CD4-positive, alpha-beta memory T cell (primary cell): ENCODE measurements at regions of chr6 and their contacts with region 1.

Region 1: DNA sequence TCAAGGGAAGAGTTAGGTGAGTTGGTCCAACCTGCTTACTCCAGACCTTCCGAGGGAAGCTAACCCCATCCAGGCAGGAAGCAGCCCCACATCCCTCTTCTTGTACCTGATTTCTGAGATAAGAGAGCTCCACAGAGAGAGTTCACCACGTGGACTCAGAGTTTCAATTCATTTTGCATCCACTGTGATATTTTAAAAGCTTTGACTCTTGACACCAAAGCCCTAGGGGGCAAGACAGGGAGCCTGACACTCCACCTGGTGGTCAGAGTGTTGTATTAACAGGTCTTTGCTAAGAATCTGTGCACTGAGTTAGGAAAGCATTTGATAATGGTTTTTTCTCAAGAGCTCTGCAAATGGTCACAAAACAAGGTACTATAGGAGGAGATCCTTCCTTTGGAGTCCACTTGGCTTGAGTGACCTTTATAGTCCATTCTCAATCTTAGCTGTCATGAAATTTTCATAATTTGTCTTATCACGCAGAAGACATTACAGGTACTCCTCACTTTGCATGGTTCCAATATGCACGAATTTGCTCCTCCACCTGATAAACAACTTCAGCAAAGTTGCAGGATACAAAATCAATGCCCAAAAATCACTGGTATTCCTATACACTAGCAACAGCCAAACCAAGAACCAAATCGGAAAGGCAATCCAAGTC is 56.2 kb upstream of the RIPOR2 start:
- DNase-seq: peak; percentile 80 to 84 (median 80)
- H3K4me3 ChIP-seq: peak overlapping the region in 1 of 2 donors; percentile 31
- H3K4me3 Mint-ChIP-seq: peak overlapping the region in 7 of 8 donors; percentile 29 to 83 (median 72)
- H3K27ac ChIP-seq: peak overlapping the region; percentile 29
- H3K27ac Mint-ChIP-seq: peak overlapping the region; percentile 75 to 94 (median 83)
- H3K4me1 ChIP-seq: peaks cover 66% of the 10 kb centered on the region
- H3K4me1 Mint-ChIP-seq: peaks cover 61 to 84% (median 75%) of the 10 kb centered on the region in 4 donors
- H3K27me3 ChIP-seq: no peaks in the 10 kb centered on the region
- H3K27me3 Mint-ChIP-seq: no peaks in the 10 kb centered on the region

Region 2: DNA sequence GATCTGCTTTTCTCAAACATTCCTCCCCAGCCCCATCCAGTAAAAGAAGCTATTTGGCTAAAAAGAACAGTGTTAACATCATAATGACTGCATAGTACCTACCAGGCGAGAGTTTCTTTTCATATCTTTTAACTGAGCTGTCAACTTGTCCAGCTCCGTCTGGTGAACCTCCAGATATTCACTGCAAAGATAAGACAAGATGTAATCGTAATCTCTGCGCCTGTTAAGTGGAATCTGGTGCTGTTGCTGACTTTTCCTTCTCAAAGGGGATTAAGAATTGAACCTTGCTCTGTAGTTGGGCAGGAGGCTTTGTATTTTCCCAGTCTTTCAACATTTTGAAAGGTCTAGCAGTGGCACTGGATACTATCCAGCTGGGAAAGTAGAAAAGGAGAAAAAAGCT is 119.2 kb before region 1 on chr6:
- CTCF ChIA-PET with region 1: interaction called, 15 read pairs
- POLR2A ChIA-PET with region 1: interaction called, 6 read pairs
- intact Hi-C with region 1: no loop called
- DNase-seq: no peak
- H3K4me3 ChIP-seq: no peak overlapping the region
- H3K4me3 Mint-ChIP-seq: peak overlapping the region in 1 of 8 donors; percentile 19
- H3K27ac ChIP-seq: peak overlapping the region; percentile 19
- H3K27ac Mint-ChIP-seq: peak overlapping the region; percentile 48 to 90 (median 80)
- H3K4me1 ChIP-seq: peaks cover 82% of the 10 kb centered on the region
- H3K4me1 Mint-ChIP-seq: peaks cover 43 to 77% (median 61%) of the 10 kb centered on the region in 4 donors
- H3K27me3 ChIP-seq: no peaks in the 10 kb centered on the region
- H3K27me3 Mint-ChIP-seq: no peaks in the 10 kb centered on the region

Region 3: GRCh38 chr6:24910961-24911712 is 80.8 kb before region 1 on chr6:
- CTCF ChIA-PET with region 1: interaction called, 95 read pairs
- POLR2A ChIA-PET with region 1: interaction called, 91 read pairs
- intact Hi-C with region 1: loop called (anchors 1 kb)
- DNase-seq: peak in 3 of 5 donors; percentile 41 to 65 (median 44)
- H3K4me3 ChIP-seq: peak overlapping the region; percentile 1 to 54
- H3K4me3 Mint-ChIP-seq: peak overlapping the region; percentile 87 to 98 (median 93)
- H3K27ac ChIP-seq: peak overlapping the region; percentile 70
- H3K27ac Mint-ChIP-seq: peak overlapping the region; percentile 87 to 99 (median 96)
- H3K4me1 ChIP-seq: peaks cover 94% of the 10 kb centered on the region
- H3K4me1 Mint-ChIP-seq: peaks cover 83 to 99% (median 91%) of the 10 kb centered on the region in 4 donors
- H3K27me3 ChIP-seq: no peaks in the 10 kb centered on the region
- H3K27me3 Mint-ChIP-seq: no peaks in the 10 kb centered on the region

Region 4: DNA sequence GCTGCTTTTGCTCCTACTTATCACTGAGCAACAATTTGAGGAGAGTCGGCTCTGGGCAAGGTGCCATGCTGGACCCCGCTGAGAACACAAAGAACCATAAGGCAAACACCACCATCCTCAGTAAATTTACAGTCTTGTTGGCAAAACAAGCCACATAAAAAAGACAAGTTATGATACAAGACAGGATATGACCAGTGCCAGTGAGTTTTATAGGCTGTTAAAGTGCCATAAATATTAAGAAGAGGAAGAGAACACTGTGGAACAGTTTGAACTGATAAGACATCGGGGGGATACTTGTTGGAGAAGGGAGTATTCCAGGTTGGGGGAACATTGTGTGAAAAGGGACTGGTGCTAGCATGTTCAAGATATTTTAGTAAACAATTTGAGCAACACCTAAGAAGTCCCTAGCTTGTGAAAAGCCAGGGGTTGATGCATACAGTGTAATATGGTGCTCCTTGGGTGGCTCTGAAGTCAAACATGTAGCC is 30.9 kb before region 1 on chr6:
- CTCF ChIA-PET with region 1: interaction called, 140 read pairs
- POLR2A ChIA-PET with region 1: interaction called, 19 read pairs
- intact Hi-C with region 1: no loop called
- DNase-seq: peak in 4 of 5 donors; percentile 40 to 58 (median 47)
- H3K4me3 ChIP-seq: no peak overlapping the region
- H3K4me3 Mint-ChIP-seq: peak overlapping the region; percentile 4 to 79 (median 64)
- H3K27ac ChIP-seq: peak overlapping the region; percentile 12
- H3K27ac Mint-ChIP-seq: peak overlapping the region; percentile 74 to 97 (median 91)
- H3K4me1 ChIP-seq: peaks cover 96% of the 10 kb centered on the region
- H3K4me1 Mint-ChIP-seq: peaks cover 68 to 90% (median 78%) of the 10 kb centered on the region in 4 donors
- H3K27me3 ChIP-seq: no peaks in the 10 kb centered on the region
- H3K27me3 Mint-ChIP-seq: no peaks in the 10 kb centered on the region

Region 5: GRCh38 chr6:25017932-25018567 is 26.1 kb after region 1 on chr6:
- CTCF ChIA-PET with region 1: interaction called, 25 read pairs
- POLR2A ChIA-PET with region 1: interaction called, 12 read pairs
- intact Hi-C with region 1: loop called (anchors 2 kb)
- DNase-seq: peak; percentile 77 to 87 (median 79)
- H3K4me3 ChIP-seq: no peak overlapping the region
- H3K4me3 Mint-ChIP-seq: peak overlapping the region in 5 of 8 donors; percentile 21 to 64 (median 40)
- H3K27ac ChIP-seq: no peak overlapping the region
- H3K27ac Mint-ChIP-seq: peak overlapping the region; percentile 74 to 93 (median 88)
- H3K4me1 ChIP-seq: peaks cover 48% of the 10 kb centered on the region
- H3K4me1 Mint-ChIP-seq: peaks cover 36 to 59% (median 38%) of the 10 kb centered on the region in 4 donors
- H3K27me3 ChIP-seq: no peaks in the 10 kb centered on the region
- H3K27me3 Mint-ChIP-seq: no peaks in the 10 kb centered on the region